ENCODE measurements at regions of chr1 and their contacts with region 1.

Region 1: GRCh38 chr1:28914228-28915030 is at the start of gene EPB41:
- DNase-seq: peak; percentile 56
- ATAC-seq: peak; percentile 97
- H3K4me3 ChIP-seq: peak within 1 kb of the TSS; percentile 66
- H3K27ac ChIP-seq: peak within 1 kb of the TSS; percentile 40; the same call in 1 of the 2 replicates
- H3K4me1 ChIP-seq: peaks cover 7% of the 10 kb centered on the region
- H3K27me3 ChIP-seq: no peaks in the 10 kb centered on the region
- CTCF ChIP-seq: no peak
- EP300 ChIP-seq: no peak
- POLR2A ChIP-seq: peak; percentile 73
- RAD21 ChIP-seq: no peak
- polyA plus RNA-seq, gene EPB41: 1.1 to 3.1 TPM

Region 2: GRCh38 chr1:28926629-28927265 is 12.3 kb after region 1 on chr1:
- CTCF ChIA-PET with region 1: interaction called, 7 read pairs
- POLR2A ChIA-PET with region 1: interaction called, 11 read pairs
- RAD21 ChIA-PET with region 1: interaction called, 19 read pairs
- SMC1A ChIA-PET with region 1: interaction called, 16 read pairs
- in situ Hi-C with region 1: no loop called
- intact Hi-C with region 1: no loop called
- DNase-seq: peak; percentile 91
- ATAC-seq: peak; percentile 96
- H3K4me3 ChIP-seq: peak overlapping the region; percentile 33
- H3K27ac ChIP-seq: peak overlapping the region; percentile 72
- H3K4me1 ChIP-seq: peaks cover 24% of the 10 kb centered on the region
- H3K27me3 ChIP-seq: no peaks in the 10 kb centered on the region
- CTCF ChIP-seq: no peak
- EP300 ChIP-seq: peak in 1 of 2 experiments; percentile 57; a peak in 1 of 4 replicates
- POLR2A ChIP-seq: no peak
- RAD21 ChIP-seq: no peak

Region 3: DNA sequence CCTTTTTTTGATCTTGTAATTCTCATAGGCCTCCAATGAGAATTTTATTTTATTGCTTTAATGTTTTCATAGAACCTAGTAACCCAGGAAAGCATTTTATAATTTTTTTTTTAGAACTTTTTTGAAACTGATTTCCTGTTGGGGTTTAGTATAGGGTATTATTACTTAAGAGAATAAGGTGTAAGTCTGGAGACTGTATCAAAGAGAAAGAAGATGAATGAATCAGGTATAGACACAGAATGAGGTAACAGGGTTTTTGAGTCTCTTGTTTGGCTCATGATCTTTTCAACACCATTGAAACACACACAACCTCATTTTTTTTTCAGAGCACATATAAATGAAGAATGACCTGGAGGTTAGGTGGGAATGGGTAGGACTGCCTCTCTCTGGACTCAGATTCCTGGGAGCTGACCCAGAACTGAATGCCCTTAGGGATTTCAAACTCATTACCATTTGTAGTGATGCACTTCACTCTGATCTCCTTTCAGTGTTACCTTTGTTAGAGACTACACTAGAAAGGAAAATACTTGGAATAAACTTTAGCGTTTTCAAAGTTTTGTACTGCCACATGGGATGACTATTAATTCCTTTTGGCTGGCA is 50.9 kb after region 1 on chr1:
- CTCF ChIA-PET with region 1: no interaction called
- POLR2A ChIA-PET with region 1: no interaction called
- RAD21 ChIA-PET with region 1: no interaction called
- SMC1A ChIA-PET with region 1: interaction called, 3 read pairs
- in situ Hi-C with region 1: no loop called
- intact Hi-C with region 1: loop called (anchors 10 kb)
- DNase-seq: no peak
- ATAC-seq: no peak
- H3K4me3 ChIP-seq: no peak overlapping the region
- H3K27ac ChIP-seq: no peak overlapping the region
- H3K4me1 ChIP-seq: no peaks in the 10 kb centered on the region; the same call in 1 of the 2 replicates
- H3K27me3 ChIP-seq: no peaks in the 10 kb centered on the region
- CTCF ChIP-seq: no peak
- EP300 ChIP-seq: no peak
- POLR2A ChIP-seq: no peak
- RAD21 ChIP-seq: no peak

Region 4: GRCh38 chr1:29162476-29163138 is 248.2 kb after region 1 on chr1:
- CTCF ChIA-PET with region 1: no interaction called
- POLR2A ChIA-PET with region 1: no interaction called
- RAD21 ChIA-PET with region 1: no interaction called
- SMC1A ChIA-PET with region 1: no interaction called
- in situ Hi-C with region 1: no loop called
- intact Hi-C with region 1: no loop called
- DNase-seq: no peak
- ATAC-seq: no peak
- H3K4me3 ChIP-seq: no peak overlapping the region
- H3K27ac ChIP-seq: no peak overlapping the region
- H3K4me1 ChIP-seq: no peaks in the 10 kb centered on the region
- H3K27me3 ChIP-seq: no peaks in the 10 kb centered on the region
- CTCF ChIP-seq: no peak
- EP300 ChIP-seq: no peak
- POLR2A ChIP-seq: no peak
- RAD21 ChIP-seq: no peak

Measured in GM12878 (cell line).